BJ (cell line): ENCODE measurements at regions of chr11 and their contacts with region 1.

Region 1: GRCh38 chr11:75450826-75451821 is 18.1 kb upstream of the KLHL35 start:
- DNase-seq: no peak
- H3K4me3 ChIP-seq: no peak overlapping the region
- H3K27me3 ChIP-seq: no peaks in the 10 kb centered on the region; the same call in 1 of the 2 replicates
- CTCF ChIP-seq: peak; percentile 57

Region 2: GRCh38 chr11:75465701-75466531 is 14.8 kb after region 1 on chr11:
- CTCF ChIA-PET with region 1: interaction called, 14 read pairs
- POLR2A ChIA-PET with region 1: no interaction called
- DNase-seq: no peak
- H3K4me3 ChIP-seq: no peak overlapping the region
- H3K27me3 ChIP-seq: no peaks in the 10 kb centered on the region
- CTCF ChIP-seq: peak; percentile 9; the same call in 1 of the 2 replicates

Region 3: GRCh38 chr11:75487365-75487764 is 36.2 kb after region 1 on chr11:
- CTCF ChIA-PET with region 1: no interaction called
- POLR2A ChIA-PET with region 1: no interaction called
- DNase-seq: no peak
- H3K4me3 ChIP-seq: no peak overlapping the region
- H3K27me3 ChIP-seq: no peaks in the 10 kb centered on the region
- CTCF ChIP-seq: no peak